ENCODE measurements at regions of chr12 and their contacts with region 1.

Region 1: DNA sequence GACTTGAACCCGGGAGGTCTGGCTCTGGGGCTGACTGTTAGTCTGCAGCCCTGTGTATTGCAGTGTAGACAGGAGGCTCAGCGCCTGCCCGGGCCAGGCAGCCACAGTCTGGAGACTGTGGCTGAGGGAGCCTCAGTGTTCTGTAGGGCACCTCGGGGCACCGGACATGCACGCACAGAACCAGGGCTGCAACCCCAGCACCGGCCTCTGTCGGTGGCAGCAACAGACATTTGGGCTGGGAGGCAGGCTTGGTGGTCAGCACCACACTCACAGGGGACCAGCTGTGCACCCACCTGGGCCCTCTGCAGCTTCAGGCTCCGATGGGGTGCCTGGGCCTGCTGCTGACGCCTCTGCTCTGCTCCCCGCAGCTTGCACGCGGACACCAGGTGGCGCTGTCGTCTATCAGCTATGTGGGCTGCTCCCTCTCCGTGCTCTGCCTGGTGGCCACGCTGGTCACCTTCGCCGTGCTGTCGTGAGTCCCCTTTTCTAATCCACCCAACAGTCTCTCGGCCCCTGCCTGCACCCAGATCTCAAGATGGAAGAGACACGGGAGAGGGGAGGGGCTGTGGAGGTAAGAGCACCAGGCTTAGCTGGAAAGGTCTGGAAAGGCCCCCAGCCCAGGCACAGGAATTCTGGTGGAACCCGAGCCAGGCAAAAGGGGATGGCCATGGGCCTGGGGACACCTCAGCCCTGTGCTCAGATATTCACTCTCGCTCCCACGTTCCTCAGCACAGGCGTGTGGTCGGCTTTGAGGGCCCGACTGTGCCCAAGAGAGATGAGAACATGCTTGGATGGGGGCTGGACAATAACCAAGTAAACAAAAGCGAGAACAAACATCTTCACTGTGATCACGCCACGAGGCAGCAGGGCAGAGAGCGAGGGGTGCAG is 151.0 kb downstream of the ADGRD1 start:
- DNase-seq: no peak
- H3K4me3 ChIP-seq: 0 out of 2 replicates have a peak overlapping the region, but pooled peaks have one; percentile 12
- CTCF ChIP-seq: peak; percentile 98

Region 2: DNA sequence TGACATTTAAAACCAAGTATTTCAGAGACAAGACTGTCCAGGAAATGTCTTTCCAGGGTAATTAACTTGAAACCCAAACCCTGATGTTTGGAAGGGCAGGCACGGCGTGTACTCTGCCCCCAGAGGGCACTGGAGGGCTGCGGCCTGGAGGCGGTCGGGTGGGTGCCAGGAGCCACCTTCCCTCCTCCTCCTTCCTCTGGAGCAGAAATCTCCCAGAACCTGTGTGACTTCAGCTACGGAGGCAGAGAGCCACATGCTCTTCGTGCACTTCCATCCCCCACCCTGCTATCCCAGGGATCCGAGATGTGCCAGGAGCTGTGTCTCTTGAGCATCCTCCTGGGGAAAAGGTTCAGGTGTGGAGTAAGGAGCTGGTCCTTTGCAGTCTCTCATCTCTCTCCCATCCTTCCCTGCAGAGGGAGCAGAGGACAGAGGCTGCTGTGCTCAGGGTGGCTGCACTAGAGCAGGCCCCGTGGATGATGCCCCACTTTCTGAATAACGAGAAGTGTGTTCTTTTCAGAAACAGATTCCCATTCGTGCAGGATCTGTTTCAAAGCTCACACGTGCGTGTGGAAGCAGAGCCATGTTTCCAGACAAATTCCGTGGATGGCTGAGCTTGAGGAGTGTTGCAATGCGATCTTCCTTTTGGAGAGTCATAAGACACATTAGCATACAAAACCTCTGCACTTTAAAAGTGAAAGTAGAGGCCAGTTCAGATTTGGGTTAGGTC is 11.8 kb after region 1 on chr12:
- CTCF ChIA-PET with region 1: interaction called, 57 read pairs
- POLR2A ChIA-PET with region 1: no interaction called
- DNase-seq: peak; percentile 12
- H3K4me3 ChIP-seq: no peak overlapping the region
- CTCF ChIP-seq: peak; percentile 42

Region 3: DNA sequence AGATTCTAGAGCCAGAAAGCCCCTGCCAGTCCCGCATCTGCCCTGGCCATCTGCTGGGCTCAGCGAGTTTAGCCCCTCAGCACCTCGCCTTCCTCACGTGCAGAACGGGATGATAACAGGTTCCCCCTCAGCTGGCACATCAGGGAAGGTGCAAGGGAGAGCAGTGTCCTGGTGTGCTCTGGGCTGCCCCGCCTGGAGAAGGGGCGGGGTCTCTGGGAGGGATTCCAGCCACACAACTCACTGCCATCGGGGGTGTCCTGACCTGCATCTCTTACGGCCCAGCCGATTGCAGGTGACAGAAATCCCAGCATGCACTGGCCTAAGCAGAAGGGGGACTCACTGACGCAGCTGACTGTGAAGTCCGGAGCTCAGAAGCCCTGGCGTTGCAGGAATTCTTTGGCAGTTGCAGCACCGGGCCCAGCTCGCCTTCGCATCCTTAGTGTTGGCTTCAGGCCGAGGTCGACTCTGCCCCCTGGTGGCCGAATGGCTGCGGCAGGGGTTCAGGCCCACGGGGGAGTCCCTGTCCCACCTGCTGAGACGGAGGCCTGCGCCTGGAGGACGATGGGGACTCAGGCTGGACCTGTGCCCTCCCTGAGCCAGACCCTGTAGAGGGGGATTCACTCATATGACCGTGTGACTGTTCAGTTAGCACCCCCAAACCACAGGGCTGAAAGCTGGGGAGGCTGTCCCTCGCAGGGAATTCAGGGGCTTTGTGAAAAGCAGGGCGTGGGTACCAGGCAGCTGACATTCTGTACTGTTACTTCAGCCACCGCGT is 27.6 kb after region 1 on chr12:
- CTCF ChIA-PET with region 1: interaction called, 30 read pairs
- POLR2A ChIA-PET with region 1: no interaction called
- DNase-seq: peak; percentile 16
- H3K4me3 ChIP-seq: no peak overlapping the region
- CTCF ChIP-seq: peak; percentile 86

Region 4: DNA sequence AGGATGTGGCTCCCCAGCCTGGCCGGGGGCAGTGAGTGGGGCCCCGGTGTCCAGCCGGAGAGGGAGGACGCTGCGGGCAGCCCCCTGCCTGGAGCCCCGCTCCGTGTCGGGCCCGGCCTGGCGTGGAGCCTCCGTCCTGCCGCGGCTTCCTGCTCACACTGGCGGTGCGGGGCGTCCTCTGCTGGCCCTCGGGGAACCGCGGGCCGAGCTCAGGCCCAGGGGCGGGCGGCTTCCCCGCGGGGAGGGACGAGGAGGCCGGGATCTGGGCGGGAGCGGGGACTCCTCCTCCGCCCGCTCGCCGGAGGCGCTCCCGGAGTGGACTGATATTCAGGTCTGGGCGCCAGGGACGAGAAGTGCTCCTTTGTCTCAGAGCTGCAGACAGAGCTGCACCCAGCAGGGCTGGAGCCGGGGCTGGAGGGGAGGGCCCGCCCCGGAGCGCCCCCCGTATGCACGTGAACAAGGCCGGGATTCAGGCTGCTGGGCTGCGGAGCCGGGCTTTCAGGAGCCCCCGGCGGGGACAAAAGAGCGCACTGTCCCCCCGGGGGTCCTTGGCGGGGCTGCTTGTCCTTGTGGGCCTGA is 725.7 kb after region 1 on chr12:
- CTCF ChIA-PET with region 1: interaction called, 72 read pairs
- POLR2A ChIA-PET with region 1: no interaction called
- DNase-seq: no peak
- H3K4me3 ChIP-seq: peak overlapping the region; percentile 70
- CTCF ChIP-seq: peak; percentile 93

Region 5: GRCh38 chr12:132003846-132004245 is 899.1 kb after region 1 on chr12:
- CTCF ChIA-PET with region 1: interaction called, 10 read pairs
- POLR2A ChIA-PET with region 1: no interaction called
- DNase-seq: peak; percentile 61
- H3K4me3 ChIP-seq: no peak overlapping the region
- CTCF ChIP-seq: no peak